Keratinocyte (primary cell): ENCODE measurements at regions of chr1 and their contacts with region 1.

Region 1: DNA sequence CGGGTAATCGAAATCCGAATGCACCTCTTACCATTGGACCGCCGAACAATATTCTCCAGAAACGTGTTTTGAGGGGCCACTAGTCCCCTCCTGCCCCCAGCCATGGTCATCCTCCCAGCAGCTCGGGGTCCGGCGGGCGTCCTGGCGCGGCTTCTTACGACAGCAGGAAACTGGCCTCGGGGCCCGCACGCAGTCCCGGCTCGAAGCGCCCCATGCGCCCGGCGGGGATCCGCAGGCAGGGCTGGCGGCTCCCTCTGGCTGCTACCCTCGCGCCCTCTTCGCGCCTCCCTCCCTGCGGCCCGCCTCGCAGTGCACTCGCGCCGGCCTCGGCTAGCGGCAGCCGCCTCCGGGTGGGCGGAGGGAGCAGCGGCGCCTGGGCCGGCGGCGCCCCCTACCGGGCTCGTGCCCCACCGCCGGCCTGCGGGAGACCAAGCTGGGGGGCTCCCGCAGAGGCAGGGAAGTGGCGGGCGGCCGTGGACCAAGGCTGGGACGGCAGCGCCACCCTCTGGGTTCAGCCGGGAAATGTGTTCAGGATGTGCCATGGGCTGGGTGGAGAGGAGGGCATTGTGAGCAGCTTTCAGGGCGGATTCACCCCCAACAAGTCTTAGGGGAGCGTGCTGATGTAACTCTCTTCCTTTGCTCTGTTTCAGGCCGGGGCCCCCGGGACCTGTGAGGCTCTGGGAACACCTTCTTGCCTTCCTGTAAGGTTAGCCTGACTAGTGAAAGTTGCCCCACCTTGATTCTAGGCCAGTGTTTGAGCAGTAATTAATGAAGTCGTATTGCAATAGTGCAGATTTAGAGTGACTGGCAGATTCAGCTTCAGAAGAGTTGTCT is at the start of gene KCNH1:
- DNase-seq: peak; percentile 15
- H3K4me3 ChIP-seq: peak within 1 kb of the TSS; percentile 27 to 67 (median 55)
- H3K27ac ChIP-seq: no peak within 1 kb of the TSS
- H3K4me1 ChIP-seq: peaks cover 4% of the 10 kb centered on the region
- H3K27me3 ChIP-seq: peaks cover 25% of the 10 kb centered on the region
- CTCF ChIP-seq: peak; percentile 64 to 84 (median 76)
- polyA plus RNA-seq, gene KCNH1: 0.03 TPM in 1 of 3 replicates, not detected in the others

Region 2: DNA sequence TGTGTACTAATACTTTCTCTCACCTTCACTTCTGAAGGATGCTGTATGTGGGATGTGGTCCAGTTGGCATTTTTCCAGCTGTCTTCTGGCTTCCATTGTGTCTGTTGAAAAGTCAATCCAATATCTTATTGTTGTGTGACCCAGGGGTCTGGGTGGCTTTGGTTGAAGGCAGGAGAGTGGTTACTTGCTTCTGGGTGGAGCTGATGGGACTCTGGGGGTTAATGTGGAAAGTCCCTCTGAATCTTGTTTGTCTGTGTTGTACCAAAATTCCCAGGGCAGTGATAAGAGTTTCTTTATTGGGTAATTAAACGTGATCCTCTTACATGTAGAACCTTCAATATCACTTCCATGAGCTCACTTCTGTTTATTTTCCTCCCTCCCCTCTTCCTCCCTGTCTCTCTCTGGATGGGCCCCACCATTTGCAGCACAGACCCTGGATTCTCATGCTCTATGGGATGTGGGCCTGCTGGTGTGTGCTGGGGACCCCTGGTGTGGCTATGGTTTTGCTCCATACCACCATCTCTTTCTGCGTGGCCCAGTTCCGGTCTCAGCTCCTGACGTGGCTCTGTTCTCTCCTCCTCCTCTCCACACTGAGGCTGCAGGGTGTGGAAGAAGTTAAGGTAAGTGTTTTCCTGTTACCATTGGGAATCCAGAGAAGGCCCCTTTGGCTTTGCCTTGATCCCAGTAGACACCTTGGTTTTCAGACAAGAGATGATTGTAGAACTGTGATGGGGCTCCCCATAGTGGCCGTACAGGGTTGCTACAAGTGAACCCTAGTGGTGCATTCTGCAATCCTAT is 733.8 kb before region 1 on chr1:
- dilution Hi-C with region 1: loop called (anchors 25 kb)
- DNase-seq: peak; percentile 32
- H3K4me3 ChIP-seq: no peak overlapping the region
- H3K27ac ChIP-seq: no peak overlapping the region
- H3K4me1 ChIP-seq: peaks cover 12% of the 10 kb centered on the region
- H3K27me3 ChIP-seq: peaks cover 11% of the 10 kb centered on the region
- CTCF ChIP-seq: peak; percentile 88 to 97 (median 91)

Region 3: DNA sequence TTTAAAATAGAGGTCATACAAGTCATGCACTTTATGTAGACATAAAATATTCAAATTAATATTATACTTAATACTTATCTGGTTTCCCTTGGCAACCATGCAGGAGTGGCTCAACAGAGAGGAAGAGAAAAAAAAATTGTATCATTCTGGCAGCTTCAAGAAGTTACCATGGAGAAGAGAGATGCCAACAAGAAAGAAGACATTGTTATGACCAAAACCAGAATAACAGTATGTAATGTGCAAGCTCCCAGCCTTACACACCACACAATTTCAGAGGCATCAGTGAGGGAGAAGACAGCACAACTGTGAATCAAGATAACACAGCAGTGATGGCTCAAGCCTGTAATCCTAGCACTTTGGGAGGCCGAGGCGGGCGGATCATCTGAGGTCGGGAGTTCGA is 76.0 kb after region 1 on chr1:
- dilution Hi-C with region 1: no loop called
- DNase-seq: no peak
- H3K4me3 ChIP-seq: no peak overlapping the region
- H3K27ac ChIP-seq: no peak overlapping the region
- H3K4me1 ChIP-seq: no peaks in the 10 kb centered on the region
- H3K27me3 ChIP-seq: no peaks in the 10 kb centered on the region
- CTCF ChIP-seq: no peak

Region 4: DNA sequence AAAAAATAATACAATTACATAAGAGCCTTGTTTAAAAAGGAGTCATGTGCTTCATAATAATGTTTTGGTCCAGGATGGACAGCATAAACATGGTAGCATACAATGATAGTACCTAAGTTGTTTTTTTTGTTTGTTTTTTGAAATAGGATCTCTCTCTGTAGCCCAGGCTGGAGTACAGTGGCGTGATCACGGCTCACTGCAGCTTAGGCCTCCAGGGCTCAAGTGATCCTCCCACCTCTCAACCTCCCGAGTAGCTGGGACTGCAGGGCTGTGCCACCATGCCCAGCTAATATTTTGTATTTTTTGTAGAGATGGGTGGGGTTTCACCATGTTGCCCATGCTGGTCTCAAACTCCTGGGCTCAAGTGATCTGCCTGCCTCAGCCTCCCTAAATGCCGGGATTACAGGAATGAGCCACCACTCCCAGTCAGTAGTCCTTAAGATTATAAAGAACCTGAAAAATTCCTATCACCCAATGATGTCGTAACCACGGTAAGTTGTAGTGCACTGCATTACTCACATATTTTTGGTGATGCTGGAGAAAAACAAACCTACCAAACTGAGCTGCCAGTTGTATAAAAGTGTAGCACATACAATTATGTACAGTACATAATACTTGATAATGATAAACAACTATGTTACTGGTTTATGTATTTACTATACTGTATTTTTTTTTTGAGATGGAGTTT is 102.7 kb after region 1 on chr1:
- dilution Hi-C with region 1: no loop called
- DNase-seq: no peak
- H3K4me3 ChIP-seq: no peak overlapping the region
- H3K27ac ChIP-seq: no peak overlapping the region
- H3K4me1 ChIP-seq: no peaks in the 10 kb centered on the region
- H3K27me3 ChIP-seq: no peaks in the 10 kb centered on the region
- CTCF ChIP-seq: no peak